CD4-positive, alpha-beta memory T cell (primary cell): ENCODE measurements at regions of chr4 and their contacts with region 1.

Region 1: GRCh38 chr4:88284439-88285234 is at the start of gene PPM1K:
- DNase-seq: peak; percentile 98 to 100 (median 99)
- H3K4me3 ChIP-seq: peak within 1 kb of the TSS; percentile 83 to 92
- H3K4me3 Mint-ChIP-seq: peak within 1 kb of the TSS; percentile 94 to 99 (median 96)
- H3K27ac ChIP-seq: peak within 1 kb of the TSS; percentile 89
- H3K27ac Mint-ChIP-seq: peak within 1 kb of the TSS; percentile 99 to 100 (median 99)
- H3K4me1 ChIP-seq: peaks cover 40% of the 10 kb centered on the region
- H3K4me1 Mint-ChIP-seq: peaks cover 29 to 56% (median 38%) of the 10 kb centered on the region in 4 donors
- H3K27me3 ChIP-seq: no peaks in the 10 kb centered on the region
- H3K27me3 Mint-ChIP-seq: peaks cover 0 to 1% of the 10 kb centered on the region in 2 donors
- total RNA-seq, gene PPM1K: 82.2 to 84.3 TPM

Region 2: GRCh38 chr4:88244816-88245579 is 39.6 kb before region 1 on chr4:
- CTCF ChIA-PET with region 1: interaction called, 4 read pairs
- POLR2A ChIA-PET with region 1: interaction called, 16 read pairs
- intact Hi-C with region 1: no loop called
- DNase-seq: peak; percentile 11 to 47 (median 17)
- H3K4me3 ChIP-seq: no peak overlapping the region
- H3K4me3 Mint-ChIP-seq: peak overlapping the region; percentile 43 to 83 (median 72)
- H3K27ac ChIP-seq: no peak overlapping the region
- H3K27ac Mint-ChIP-seq: peak overlapping the region in 4 of 7 donors; percentile 8 to 75 (median 28)
- H3K4me1 ChIP-seq: peaks cover 13% of the 10 kb centered on the region
- H3K4me1 Mint-ChIP-seq: peaks cover 7 to 15% (median 10%) of the 10 kb centered on the region in 4 donors
- H3K27me3 ChIP-seq: no peaks in the 10 kb centered on the region
- H3K27me3 Mint-ChIP-seq: peaks cover 1 to 2% of the 10 kb centered on the region in 2 donors

Region 3: GRCh38 chr4:88378691-88379559 is 94.3 kb after region 1 on chr4 and contains the start of gene HERC6:
- CTCF ChIA-PET with region 1: interaction called, 18 read pairs
- POLR2A ChIA-PET with region 1: interaction called, 66 read pairs
- intact Hi-C with region 1: loop called (anchors 1 kb)
- DNase-seq: peak; percentile 74 to 89 (median 80)
- H3K4me3 ChIP-seq: peak within 1 kb of the TSS; percentile 82 to 96
- H3K4me3 Mint-ChIP-seq: peak within 1 kb of the TSS; percentile 95 to 99 (median 97)
- H3K27ac ChIP-seq: peak within 1 kb of the TSS; percentile 86
- H3K27ac Mint-ChIP-seq: peak within 1 kb of the TSS; percentile 94 to 98 (median 97)
- H3K4me1 ChIP-seq: peaks cover 37% of the 10 kb centered on the region
- H3K4me1 Mint-ChIP-seq: peaks cover 37 to 54% (median 43%) of the 10 kb centered on the region in 4 donors
- H3K27me3 ChIP-seq: no peaks in the 10 kb centered on the region
- H3K27me3 Mint-ChIP-seq: no peaks in the 10 kb centered on the region
- total RNA-seq, gene HERC6: 26.8 to 29.5 TPM

Region 4: DNA sequence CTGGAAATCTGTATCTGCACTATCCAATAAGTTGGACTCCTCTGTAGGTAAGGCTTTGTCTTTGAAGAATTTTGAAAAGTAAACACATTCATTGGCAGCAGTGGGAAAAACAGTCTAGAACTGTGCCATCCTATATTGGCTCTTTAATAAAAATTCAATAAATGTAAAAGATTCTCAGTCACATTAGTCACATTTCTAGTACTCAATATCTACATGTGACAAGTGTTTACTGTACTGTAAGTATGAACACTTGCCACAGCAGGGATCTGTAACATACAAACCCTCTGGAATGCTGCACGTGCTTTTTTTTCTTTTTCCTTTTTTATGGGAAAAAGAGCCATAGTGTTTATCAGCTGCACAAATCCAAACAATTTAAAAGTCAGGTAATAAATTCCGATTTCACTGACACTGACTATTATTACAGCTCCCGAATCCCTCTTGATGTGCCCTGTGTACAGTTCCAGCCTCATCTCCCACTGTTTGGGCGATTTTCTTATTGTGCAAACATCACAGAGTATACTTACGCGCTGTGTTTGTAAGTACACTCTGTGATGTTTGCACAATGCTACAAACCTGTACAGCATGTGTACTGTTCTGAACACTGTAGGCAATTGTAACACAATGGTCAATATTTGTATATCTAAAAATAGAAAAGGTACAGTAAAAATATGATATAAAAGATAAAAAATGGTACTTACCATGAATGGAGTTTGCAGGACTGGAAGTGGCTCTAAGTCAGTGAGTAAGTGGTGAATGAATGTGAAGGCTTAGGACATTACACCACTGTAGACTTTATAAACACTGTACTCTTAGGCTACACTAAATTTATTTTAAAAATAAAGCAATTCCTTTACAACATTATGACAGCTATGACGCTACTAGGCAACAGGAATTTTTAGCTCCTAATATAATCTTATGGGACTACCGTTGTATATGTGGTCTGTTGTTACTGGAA is 230.2 kb after region 1 on chr4:
- CTCF ChIA-PET with region 1: interaction called, 6 read pairs
- POLR2A ChIA-PET with region 1: interaction called, 5 read pairs
- intact Hi-C with region 1: loop called (anchors 2 kb)
- DNase-seq: no peak
- H3K4me3 ChIP-seq: no peak overlapping the region
- H3K4me3 Mint-ChIP-seq: no peak overlapping the region
- H3K27ac ChIP-seq: no peak overlapping the region
- H3K27ac Mint-ChIP-seq: no peak overlapping the region
- H3K4me1 ChIP-seq: no peaks in the 10 kb centered on the region
- H3K4me1 Mint-ChIP-seq: no peaks in the 10 kb centered on the region
- H3K27me3 ChIP-seq: no peaks in the 10 kb centered on the region
- H3K27me3 Mint-ChIP-seq: peaks cover 0 to 4% of the 10 kb centered on the region in 2 donors

Region 5: GRCh38 chr4:88591787-88592599 is 307.4 kb after region 1 on chr4 and contains the start of gene HERC3:
- CTCF ChIA-PET with region 1: no interaction called
- POLR2A ChIA-PET with region 1: interaction called, 12 read pairs
- intact Hi-C with region 1: loop called (anchors 1 kb)
- DNase-seq: peak; percentile 87 to 91 (median 90)
- H3K4me3 ChIP-seq: peak within 1 kb of the TSS; percentile 33 to 74
- H3K4me3 Mint-ChIP-seq: peak within 1 kb of the TSS; percentile 95 to 99 (median 98)
- H3K27ac ChIP-seq: peak within 1 kb of the TSS; percentile 89
- H3K27ac Mint-ChIP-seq: peak within 1 kb of the TSS; percentile 96 to 99 (median 99)
- H3K4me1 ChIP-seq: peaks cover 32% of the 10 kb centered on the region
- H3K4me1 Mint-ChIP-seq: peaks cover 29 to 54% (median 37%) of the 10 kb centered on the region in 4 donors
- H3K27me3 ChIP-seq: no peaks in the 10 kb centered on the region
- H3K27me3 Mint-ChIP-seq: no peaks in the 10 kb centered on the region
- total RNA-seq, gene HERC3: 95.5 to 97.1 TPM

Region 6: DNA sequence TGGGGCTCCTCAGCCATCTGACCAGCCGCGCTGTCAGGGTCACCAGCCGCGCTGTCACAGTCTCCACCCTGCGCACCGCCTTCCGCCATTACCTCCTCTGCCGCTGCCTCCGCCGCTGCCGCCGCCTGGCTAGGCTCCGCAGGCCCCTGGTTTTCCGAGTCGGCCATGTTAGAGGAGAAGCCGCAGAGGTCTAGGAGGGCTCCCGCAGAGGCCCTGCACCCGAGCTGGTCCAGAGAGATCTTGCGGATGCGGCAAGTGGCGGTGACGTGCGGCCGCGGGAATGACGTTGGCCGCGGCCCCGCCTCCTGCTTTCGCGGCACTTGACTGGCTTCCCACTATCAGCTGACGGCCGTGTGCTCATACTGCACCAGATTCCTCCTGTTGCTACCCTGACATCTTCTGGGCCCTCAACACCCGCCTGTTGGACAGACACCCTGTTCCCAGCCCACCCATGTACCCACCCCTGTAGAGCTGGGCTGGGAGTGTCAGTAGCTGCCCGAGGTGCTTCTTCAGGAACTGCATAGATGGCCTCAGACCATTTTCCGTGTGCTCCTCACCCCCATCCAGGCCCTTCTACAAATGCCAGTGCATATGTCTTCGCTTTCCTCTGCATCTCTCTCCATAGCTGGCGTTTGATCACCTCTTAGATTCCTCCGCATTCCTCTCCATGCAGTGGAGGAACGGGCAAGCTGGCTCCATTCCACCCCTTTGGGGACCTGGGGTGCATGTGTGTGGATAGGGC is 413.1 kb after region 1 on chr4 and contains the start of gene NAP1L5:
- CTCF ChIA-PET with region 1: no interaction called
- POLR2A ChIA-PET with region 1: no interaction called
- intact Hi-C with region 1: loop called (anchors 5 kb)
- DNase-seq: peak; percentile 79 to 86 (median 85)
- H3K4me3 ChIP-seq: peak within 1 kb of the TSS; percentile 58 to 61
- H3K4me3 Mint-ChIP-seq: peak within 1 kb of the TSS; percentile 80 to 95 (median 90)
- H3K27ac ChIP-seq: peak within 1 kb of the TSS; percentile 62
- H3K27ac Mint-ChIP-seq: peak within 1 kb of the TSS; percentile 92 to 96 (median 94)
- H3K4me1 ChIP-seq: peaks cover 11% of the 10 kb centered on the region
- H3K4me1 Mint-ChIP-seq: peaks cover 9 to 25% (median 18%) of the 10 kb centered on the region in 4 donors
- H3K27me3 ChIP-seq: no peaks in the 10 kb centered on the region
- H3K27me3 Mint-ChIP-seq: no peaks in the 10 kb centered on the region
- total RNA-seq, gene NAP1L5: 1.2 to 1.6 TPM

Region 7: GRCh38 chr4:89307446-89308160 is 1023.0 kb after region 1 on chr4 and contains the start of gene GPRIN3:
- CTCF ChIA-PET with region 1: no interaction called
- POLR2A ChIA-PET with region 1: interaction called, 7 read pairs
- intact Hi-C with region 1: loop called (anchors 2 kb)
- DNase-seq: peak; percentile 65 to 83 (median 68)
- H3K4me3 ChIP-seq: peak within 1 kb of the TSS; percentile 85 to 100
- H3K4me3 Mint-ChIP-seq: peak within 1 kb of the TSS; percentile 95 to 100 (median 99)
- H3K27ac ChIP-seq: peak within 1 kb of the TSS; percentile 87
- H3K27ac Mint-ChIP-seq: peak within 1 kb of the TSS; percentile 87 to 99 (median 98)
- H3K4me1 ChIP-seq: peaks cover 52% of the 10 kb centered on the region
- H3K4me1 Mint-ChIP-seq: peaks cover 34 to 74% (median 48%) of the 10 kb centered on the region in 4 donors
- H3K27me3 ChIP-seq: no peaks in the 10 kb centered on the region
- H3K27me3 Mint-ChIP-seq: no peaks in the 10 kb centered on the region
- total RNA-seq, gene GPRIN3: 32.5 TPM